WTC11 (cell line): ENCODE measurements at regions of chr2 and their contacts with region 1.

Region 1: GRCh38 chr2:208254871-208255556 is at the start of gene IDH1:
- DNase-seq: peak; percentile 99
- ATAC-seq: peak; percentile 80
- H3K4me3 Mint-ChIP-seq: peak within 1 kb of the TSS; percentile 99
- H3K27ac Mint-ChIP-seq: peak within 1 kb of the TSS; percentile 99
- H3K4me1 Mint-ChIP-seq: peaks cover 42% of the 10 kb centered on the region
- H3K27me3 Mint-ChIP-seq: no peaks in the 10 kb centered on the region
- CTCF ChIP-seq: no peak
- total RNA-seq, gene IDH1: 280 to 352 TPM (median 291 TPM) in 3 replicates

Region 2: GRCh38 chr2:208142240-208142924 is 112.6 kb before region 1 on chr2:
- CTCF ChIA-PET with region 1: interaction called, 12 read pairs
- POLR2A ChIA-PET with region 1: no interaction called
- DNase-seq: no peak
- ATAC-seq: no peak; the same call in 1 of the 2 replicates
- H3K4me3 Mint-ChIP-seq: no peak overlapping the region; the same call in 1 of the 2 replicates
- H3K27ac Mint-ChIP-seq: peak overlapping the region; percentile 90
- H3K4me1 Mint-ChIP-seq: peaks cover 31% of the 10 kb centered on the region
- H3K27me3 Mint-ChIP-seq: peaks cover 3% of the 10 kb centered on the region; the same call in 1 of the 2 replicates
- CTCF ChIP-seq: no peak

Region 3: GRCh38 chr2:208175069-208175839 is 79.8 kb before region 1 on chr2:
- CTCF ChIA-PET with region 1: interaction called, 37 read pairs
- POLR2A ChIA-PET with region 1: interaction called, 11 read pairs
- DNase-seq: peak; percentile 76
- ATAC-seq: peak; percentile 98
- H3K4me3 Mint-ChIP-seq: no peak overlapping the region
- H3K27ac Mint-ChIP-seq: no peak overlapping the region
- H3K4me1 Mint-ChIP-seq: peaks cover 17% of the 10 kb centered on the region
- H3K27me3 Mint-ChIP-seq: no peaks in the 10 kb centered on the region
- CTCF ChIP-seq: peak; percentile 71

Region 4: DNA sequence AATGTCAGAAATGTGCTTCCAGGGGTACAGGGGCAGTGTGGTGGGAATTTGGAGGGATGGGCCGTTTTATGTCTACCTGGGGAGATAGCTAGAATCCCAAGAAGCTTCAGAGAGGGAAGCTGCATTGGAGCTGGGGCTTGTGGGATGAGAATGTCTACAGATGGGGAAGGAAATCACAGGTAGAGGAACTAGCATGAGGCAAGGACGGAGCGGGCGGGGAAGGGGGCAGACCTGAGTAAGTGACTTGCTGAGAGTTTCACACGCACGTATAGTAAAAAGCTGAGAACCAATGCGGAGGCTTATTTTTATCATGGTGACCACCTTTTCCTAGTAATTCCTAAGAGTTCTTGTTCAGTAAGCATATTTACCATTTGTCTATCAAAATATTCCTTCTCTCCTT is 71.5 kb before region 1 on chr2:
- CTCF ChIA-PET with region 1: interaction called, 11 read pairs
- POLR2A ChIA-PET with region 1: no interaction called
- DNase-seq: peak; percentile 56
- ATAC-seq: peak; percentile 84
- H3K4me3 Mint-ChIP-seq: peak overlapping the region; percentile 67
- H3K27ac Mint-ChIP-seq: peak overlapping the region; percentile 61; the same call in 1 of the 2 replicates
- H3K4me1 Mint-ChIP-seq: peaks cover 65% of the 10 kb centered on the region
- H3K27me3 Mint-ChIP-seq: no peaks in the 10 kb centered on the region
- CTCF ChIP-seq: no peak

Region 5: DNA sequence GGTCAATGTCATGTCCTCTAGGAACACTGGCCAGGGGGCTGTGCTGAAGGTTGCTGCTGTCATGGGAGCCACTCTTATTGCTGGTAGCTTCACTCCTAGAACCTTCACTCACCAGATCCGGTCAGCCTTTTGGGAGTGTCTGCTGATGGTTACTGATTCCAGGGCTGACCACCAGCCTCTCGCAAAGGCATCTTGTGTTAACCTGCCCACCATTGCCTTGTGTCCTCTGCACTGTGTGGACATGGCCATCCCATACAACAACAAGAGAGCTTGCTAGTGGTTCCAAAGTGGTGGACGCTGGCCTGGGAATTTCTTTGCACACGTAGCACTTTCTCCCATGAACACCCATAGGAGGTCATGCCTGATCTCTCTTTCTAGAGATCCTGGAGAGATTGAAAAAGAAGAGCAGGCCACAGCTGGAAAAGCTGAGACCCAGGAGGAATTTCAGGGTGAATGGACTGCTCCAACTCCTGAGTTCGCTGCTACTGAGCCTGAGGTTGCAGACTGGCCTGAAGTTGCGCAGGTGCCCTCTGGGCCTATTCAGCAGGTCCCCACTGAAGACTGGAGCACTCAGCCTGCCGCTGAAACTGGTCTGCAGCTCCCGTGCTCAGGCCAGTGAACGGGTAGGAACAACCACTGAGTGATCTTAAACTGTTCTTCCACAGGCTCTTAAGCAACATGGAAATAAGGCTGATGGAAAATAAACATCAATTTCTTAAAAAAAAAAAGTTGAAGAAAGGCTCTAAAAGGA is 46.5 kb before region 1 on chr2:
- CTCF ChIA-PET with region 1: no interaction called
- POLR2A ChIA-PET with region 1: no interaction called
- DNase-seq: no peak
- ATAC-seq: no peak
- H3K4me3 Mint-ChIP-seq: no peak overlapping the region
- H3K27ac Mint-ChIP-seq: no peak overlapping the region
- H3K4me1 Mint-ChIP-seq: peaks cover 4% of the 10 kb centered on the region; the same call in 1 of the 2 replicates
- H3K27me3 Mint-ChIP-seq: no peaks in the 10 kb centered on the region
- CTCF ChIP-seq: no peak

Region 6: DNA sequence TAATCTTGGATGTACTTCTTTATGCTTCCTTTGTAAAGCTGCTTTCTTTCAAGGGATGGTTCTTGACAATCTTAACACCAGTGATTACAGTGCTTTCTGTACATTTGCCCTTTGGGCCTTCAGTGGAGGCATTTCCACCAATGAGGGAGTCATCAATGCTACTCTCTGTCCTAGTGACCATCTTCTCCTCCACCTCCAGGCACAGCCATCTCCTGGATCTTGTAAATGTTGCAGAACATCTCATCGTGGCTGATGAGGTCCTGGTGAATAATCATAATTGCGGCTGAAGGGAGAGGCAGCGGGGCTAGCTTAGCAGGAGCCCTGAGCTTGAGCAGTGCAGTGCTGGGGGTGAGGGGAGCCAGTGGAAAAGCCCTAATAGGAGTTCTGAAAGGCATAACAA is 32.7 kb before region 1 on chr2:
- CTCF ChIA-PET with region 1: no interaction called
- POLR2A ChIA-PET with region 1: no interaction called
- DNase-seq: no peak
- ATAC-seq: no peak
- H3K4me3 Mint-ChIP-seq: no peak overlapping the region
- H3K27ac Mint-ChIP-seq: no peak overlapping the region
- H3K4me1 Mint-ChIP-seq: no peaks in the 10 kb centered on the region
- H3K27me3 Mint-ChIP-seq: peaks cover 4% of the 10 kb centered on the region; the same call in 1 of the 2 replicates
- CTCF ChIP-seq: no peak

Region 7: GRCh38 chr2:208265801-208266552 is 11.0 kb after region 1 on chr2 and contains the start of gene PIKFYVE:
- CTCF ChIA-PET with region 1: interaction called, 91 read pairs
- POLR2A ChIA-PET with region 1: interaction called, 38 read pairs
- DNase-seq: peak; percentile 94
- ATAC-seq: peak; percentile 90
- H3K4me3 Mint-ChIP-seq: peak within 1 kb of the TSS; percentile 93
- H3K27ac Mint-ChIP-seq: peak within 1 kb of the TSS; percentile 97
- H3K4me1 Mint-ChIP-seq: peaks cover 28% of the 10 kb centered on the region
- H3K27me3 Mint-ChIP-seq: no peaks in the 10 kb centered on the region
- CTCF ChIP-seq: no peak
- total RNA-seq, gene PIKFYVE: 28.9 to 36.1 TPM (median 33.6 TPM) in 3 replicates

Region 8: GRCh38 chr2:208359632-208359986 is 104.6 kb after region 1 on chr2:
- CTCF ChIA-PET with region 1: no interaction called
- POLR2A ChIA-PET with region 1: no interaction called
- DNase-seq: peak; percentile 27
- ATAC-seq: peak; percentile 84
- H3K4me3 Mint-ChIP-seq: no peak overlapping the region
- H3K27ac Mint-ChIP-seq: no peak overlapping the region
- H3K4me1 Mint-ChIP-seq: peaks cover 21% of the 10 kb centered on the region
- H3K27me3 Mint-ChIP-seq: no peaks in the 10 kb centered on the region
- CTCF ChIP-seq: no peak